Colonic mucosa (tissue), 4 donors: ENCODE measurements at regions of chr16 and their contacts with region 1.

Region 1: GRCh38 chr16:22417019-22417418 is 42.6 kb upstream of the CDR2 start:
- DNase-seq: no peak
- H3K4me3 ChIP-seq: no peak overlapping the region
- H3K27ac ChIP-seq: no peak overlapping the region
- H3K4me1 ChIP-seq: no peaks in the 10 kb centered on the region
- H3K27me3 ChIP-seq: no peaks in the 10 kb centered on the region
- CTCF ChIP-seq: no peak

Region 2: GRCh38 chr16:22321339-22322001 is 95.5 kb before region 1 on chr16:
- intact Hi-C with region 1: loop called (anchors 10 kb)
- DNase-seq: peak; percentile 58
- H3K4me3 ChIP-seq: no peak overlapping the region
- H3K27ac ChIP-seq: no peak overlapping the region
- H3K4me1 ChIP-seq: no peaks in the 10 kb centered on the region
- H3K27me3 ChIP-seq: no peaks in the 10 kb centered on the region
- CTCF ChIP-seq: peak; percentile 88

Region 3: DNA sequence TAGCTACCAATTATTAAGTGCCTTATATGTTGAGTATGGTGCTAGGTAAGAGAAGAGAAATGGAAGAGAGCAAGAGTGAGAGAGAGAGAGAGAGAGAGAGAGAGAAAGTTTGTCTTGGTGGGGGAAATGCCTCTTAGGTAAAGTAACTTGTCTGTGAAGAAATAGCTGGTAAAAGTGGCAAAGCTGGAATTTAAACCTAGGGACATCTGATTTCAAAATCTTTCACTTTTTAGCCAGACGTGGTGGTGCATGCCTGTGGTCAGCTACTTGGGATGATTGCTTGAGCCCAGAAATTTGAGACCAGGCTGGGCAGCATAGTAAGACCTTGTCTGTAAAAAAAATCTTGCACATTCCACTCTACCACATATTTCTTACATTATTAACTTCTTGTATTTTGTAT is 19.6 kb before region 1 on chr16:
- intact Hi-C with region 1: no loop called
- DNase-seq: no peak
- H3K4me3 ChIP-seq: no peak overlapping the region
- H3K27ac ChIP-seq: no peak overlapping the region
- H3K4me1 ChIP-seq: no peaks in the 10 kb centered on the region
- H3K27me3 ChIP-seq: no peaks in the 10 kb centered on the region
- CTCF ChIP-seq: no peak